Activated CD4-positive, alpha-beta T cell treated with anti-CD3 and anti-CD28 coated beads, Interleukin-2, amount 10 ng/mL, durations not matched to agents 24 days and 14 days (primary cell): ENCODE measurements at regions of chr19 and their contacts with region 1.

Region 1: GRCh38 chr19:4267101-4267900 is 11.8 kb upstream of the SHD start:
- DNase-seq: peak; percentile 87
- H3K4me3 Mint-ChIP-seq: no peak overlapping the region
- H3K27ac Mint-ChIP-seq: peak overlapping the region; percentile 4
- H3K4me1 Mint-ChIP-seq: peaks cover 13% of the 10 kb centered on the region
- H3K27me3 Mint-ChIP-seq: no peaks in the 10 kb centered on the region

Region 2: GRCh38 chr19:4224470-4224869 is 42.8 kb before region 1 on chr19:
- intact Hi-C with region 1: no loop called
- DNase-seq: no peak
- H3K4me3 Mint-ChIP-seq: no peak overlapping the region
- H3K27ac Mint-ChIP-seq: no peak overlapping the region
- H3K4me1 Mint-ChIP-seq: peaks cover 6% of the 10 kb centered on the region
- H3K27me3 Mint-ChIP-seq: no peaks in the 10 kb centered on the region

Region 3: DNA sequence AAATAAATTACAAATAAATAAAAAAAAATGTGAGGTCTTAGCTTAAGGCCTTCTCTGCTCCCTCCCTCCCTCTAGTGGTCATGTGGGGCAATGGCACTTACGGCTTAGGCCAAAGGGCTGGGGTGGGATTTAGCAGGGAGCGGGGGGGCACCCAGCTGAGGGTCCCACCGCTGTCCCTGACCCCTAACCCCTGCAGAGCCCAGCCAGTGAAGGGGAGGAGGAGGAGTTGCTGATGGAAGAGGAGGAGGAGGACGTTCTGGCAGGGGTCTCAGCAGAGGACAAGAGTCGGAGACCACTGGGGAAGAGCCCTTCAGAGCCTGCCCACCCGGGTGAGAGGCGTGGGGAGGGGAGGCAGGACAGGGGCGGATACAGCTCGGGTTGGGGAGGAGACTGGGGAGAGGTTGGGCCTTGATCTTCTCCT is 85.4 kb after region 1 on chr19:
- intact Hi-C with region 1: loop called (anchors 1 kb)
- DNase-seq: peak; percentile 86
- H3K4me3 Mint-ChIP-seq: no peak overlapping the region
- H3K27ac Mint-ChIP-seq: no peak overlapping the region
- H3K4me1 Mint-ChIP-seq: peaks cover 2% of the 10 kb centered on the region
- H3K27me3 Mint-ChIP-seq: no peaks in the 10 kb centered on the region